IMR-90 (cell line): ENCODE measurements at regions of chr15 and their contacts with region 1.

Region 1: DNA sequence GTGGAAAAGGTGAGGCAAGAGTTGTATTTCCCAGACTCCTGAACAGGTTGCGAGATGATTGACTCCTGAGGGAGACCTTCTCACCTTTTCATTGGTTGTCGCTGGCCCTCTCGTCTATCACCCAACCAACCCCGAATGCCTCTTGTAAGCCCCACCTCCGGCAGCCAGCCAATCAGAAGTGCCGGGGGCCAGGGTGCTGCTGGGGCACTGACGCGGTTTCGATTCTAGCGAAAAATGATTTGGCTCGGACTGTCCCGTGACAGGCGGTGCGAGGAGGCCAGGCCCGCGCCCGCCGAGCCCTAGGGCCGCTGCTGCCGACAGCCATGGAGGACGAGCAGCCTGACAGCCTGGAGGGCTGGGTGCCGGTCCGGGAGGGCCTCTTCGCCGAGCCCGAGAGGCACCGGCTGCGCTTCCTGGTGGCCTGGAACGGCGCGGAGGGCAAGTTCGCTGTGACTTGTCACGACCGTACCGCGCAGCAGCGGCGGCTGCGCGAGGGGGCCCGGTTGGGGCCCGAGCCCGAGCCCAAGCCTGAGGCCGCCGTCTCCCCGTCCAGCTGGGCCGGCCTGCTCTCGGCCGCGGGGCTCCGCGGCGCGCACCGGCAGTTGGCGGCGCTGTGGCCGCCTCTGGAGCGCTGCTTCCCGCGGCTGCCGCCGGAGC is at the start of gene WHAMM:
- DNase-seq: peak; percentile 98
- ATAC-seq: peak; percentile 96
- H3K4me3 ChIP-seq: peak within 1 kb of the TSS; percentile 88
- H3K27ac ChIP-seq: peak within 1 kb of the TSS; percentile 92
- H3K4me1 ChIP-seq: no peaks in the 10 kb centered on the region
- H3K27me3 ChIP-seq: no peaks in the 10 kb centered on the region
- CTCF ChIP-seq: 0 out of 2 replicates have a peak, but pooled peaks have one; percentile 24
- POLR2A ChIP-seq: peak; percentile 78
- RAD21 ChIP-seq: 0 out of 2 replicates have a peak, but pooled peaks have one; percentile 5
- total RNA-seq, gene WHAMM: 1.4 and 1.9 TPM in 2 replicates

Region 2: GRCh38 chr15:82749951-82750830 is 59.3 kb before region 1 on chr15:
- CTCF ChIA-PET with region 1: no interaction called
- POLR2A ChIA-PET with region 1: interaction called, 3 read pairs
- dilution Hi-C with region 1: no loop called
- in situ Hi-C with region 1: loop called (anchors 10 kb)
- intact Hi-C with region 1: loop called (anchors 2 kb)
- DNase-seq: peak; percentile 94
- ATAC-seq: peak; percentile 99
- H3K4me3 ChIP-seq: peak overlapping the region; percentile 86
- H3K27ac ChIP-seq: peak overlapping the region; percentile 87
- H3K4me1 ChIP-seq: peaks cover 2% of the 10 kb centered on the region; the same call in 1 of the 2 replicates
- H3K27me3 ChIP-seq: no peaks in the 10 kb centered on the region
- CTCF ChIP-seq: no peak
- POLR2A ChIP-seq: peak; percentile 77
- RAD21 ChIP-seq: no peak

Region 3: DNA sequence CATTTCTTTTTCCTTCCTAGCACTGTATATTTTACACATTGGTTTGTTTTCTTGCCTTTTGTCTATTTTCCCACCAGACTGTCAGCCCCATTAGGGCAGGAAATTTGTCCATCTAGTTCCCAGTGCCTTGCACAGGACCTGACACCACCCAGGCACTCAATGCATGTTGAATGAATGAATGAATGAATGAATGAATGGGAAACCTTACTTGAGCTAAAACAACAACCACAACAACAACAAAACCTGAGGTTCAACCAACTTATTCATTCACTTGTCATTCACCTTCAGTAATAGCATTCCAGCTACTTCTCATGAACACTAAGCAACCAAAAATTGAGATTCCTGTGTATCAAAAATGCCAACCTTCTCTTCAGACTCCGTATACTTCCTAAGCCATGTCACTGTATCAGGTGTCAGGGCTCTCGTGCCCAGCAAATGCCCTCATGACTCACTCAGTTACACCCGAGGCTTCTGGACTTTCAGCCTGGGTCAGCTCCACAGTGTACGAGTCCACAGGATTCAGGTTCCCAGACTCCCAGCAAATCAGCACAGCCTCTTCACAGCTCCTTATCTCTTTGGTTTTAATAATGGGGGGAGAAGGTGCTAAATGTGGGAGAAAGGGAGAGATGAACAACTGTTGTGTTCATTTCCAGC is 41.0 kb before region 1 on chr15:
- CTCF ChIA-PET with region 1: no interaction called
- POLR2A ChIA-PET with region 1: no interaction called
- dilution Hi-C with region 1: no loop called
- in situ Hi-C with region 1: no loop called
- intact Hi-C with region 1: loop called (anchors 5 kb)
- DNase-seq: peak; percentile 19
- ATAC-seq: peak; percentile 48
- H3K4me3 ChIP-seq: no peak overlapping the region
- H3K27ac ChIP-seq: no peak overlapping the region
- H3K4me1 ChIP-seq: no peaks in the 10 kb centered on the region
- H3K27me3 ChIP-seq: no peaks in the 10 kb centered on the region
- CTCF ChIP-seq: no peak
- POLR2A ChIP-seq: no peak
- RAD21 ChIP-seq: no peak

Region 4: DNA sequence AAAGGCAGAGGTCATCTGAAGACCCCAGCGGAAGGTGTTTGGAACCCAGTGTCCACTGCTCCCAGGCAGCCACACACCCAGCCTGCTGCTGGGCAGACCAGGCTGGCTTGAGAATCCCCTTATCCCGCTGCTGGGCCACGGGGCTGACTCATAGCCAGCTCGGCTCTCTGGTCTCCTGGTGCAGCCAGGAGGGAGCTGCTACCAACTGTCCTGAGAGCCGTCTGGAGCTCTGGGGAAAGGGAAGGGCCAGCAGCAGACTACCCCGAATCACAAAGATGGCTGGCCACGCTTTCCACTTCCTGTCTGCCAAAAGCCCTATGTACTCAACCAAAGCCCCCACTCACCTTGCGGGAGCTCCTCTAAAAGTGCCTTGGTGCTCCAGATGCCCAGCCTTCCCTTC is 38.2 kb after region 1 on chr15:
- CTCF ChIA-PET with region 1: no interaction called
- POLR2A ChIA-PET with region 1: no interaction called
- dilution Hi-C with region 1: no loop called
- in situ Hi-C with region 1: no loop called
- intact Hi-C with region 1: no loop called
- DNase-seq: peak; percentile 24
- ATAC-seq: no peak; the same call in 1 of the 2 replicates
- H3K4me3 ChIP-seq: no peak overlapping the region
- H3K27ac ChIP-seq: no peak overlapping the region
- H3K4me1 ChIP-seq: peaks cover 11% of the 10 kb centered on the region; the same call in 1 of the 2 replicates
- H3K27me3 ChIP-seq: no peaks in the 10 kb centered on the region
- CTCF ChIP-seq: no peak
- POLR2A ChIP-seq: no peak
- RAD21 ChIP-seq: no peak